Activated T-helper 1 cell treated with anti-CD3 and anti-CD28 coated beads, Interleukin-12 subunit alpha, Interleukin-12 subunit beta, Interleukin-2, Interleukin-4 antibody, amounts not matched to agents 30 ng/mL and 10 ng/mL and 1 ng/mL, durations not matched to agents 14 hours and 24 hours and 36 hours (primary cell): ENCODE measurements at regions of chr2 and their contacts with region 1.

Region 1: GRCh38 chr2:218568190-218569037 is at the starts of genes CNOT9 and USP37:
- DNase-seq: peak; percentile 100
- H3K4me3 Mint-ChIP-seq: peak within 1 kb of the TSS; percentile 94
- H3K27ac Mint-ChIP-seq: peak within 1 kb of the TSS; percentile 99
- H3K4me1 Mint-ChIP-seq: peaks cover 59% of the 10 kb centered on the region
- H3K27me3 Mint-ChIP-seq: peaks cover 3% of the 10 kb centered on the region
- total RNA-seq, gene CNOT9: 138 TPM in 2 replicates
- total RNA-seq, gene USP37: 43.5 and 50.4 TPM in 2 replicates

Region 2: GRCh38 chr2:217662984-217663602 is 905.3 kb before region 1 on chr2:
- intact Hi-C with region 1: no loop called
- DNase-seq: no peak
- H3K4me3 Mint-ChIP-seq: no peak overlapping the region
- H3K27ac Mint-ChIP-seq: no peak overlapping the region
- H3K4me1 Mint-ChIP-seq: peaks cover 17% of the 10 kb centered on the region
- H3K27me3 Mint-ChIP-seq: no peaks in the 10 kb centered on the region

Region 3: DNA sequence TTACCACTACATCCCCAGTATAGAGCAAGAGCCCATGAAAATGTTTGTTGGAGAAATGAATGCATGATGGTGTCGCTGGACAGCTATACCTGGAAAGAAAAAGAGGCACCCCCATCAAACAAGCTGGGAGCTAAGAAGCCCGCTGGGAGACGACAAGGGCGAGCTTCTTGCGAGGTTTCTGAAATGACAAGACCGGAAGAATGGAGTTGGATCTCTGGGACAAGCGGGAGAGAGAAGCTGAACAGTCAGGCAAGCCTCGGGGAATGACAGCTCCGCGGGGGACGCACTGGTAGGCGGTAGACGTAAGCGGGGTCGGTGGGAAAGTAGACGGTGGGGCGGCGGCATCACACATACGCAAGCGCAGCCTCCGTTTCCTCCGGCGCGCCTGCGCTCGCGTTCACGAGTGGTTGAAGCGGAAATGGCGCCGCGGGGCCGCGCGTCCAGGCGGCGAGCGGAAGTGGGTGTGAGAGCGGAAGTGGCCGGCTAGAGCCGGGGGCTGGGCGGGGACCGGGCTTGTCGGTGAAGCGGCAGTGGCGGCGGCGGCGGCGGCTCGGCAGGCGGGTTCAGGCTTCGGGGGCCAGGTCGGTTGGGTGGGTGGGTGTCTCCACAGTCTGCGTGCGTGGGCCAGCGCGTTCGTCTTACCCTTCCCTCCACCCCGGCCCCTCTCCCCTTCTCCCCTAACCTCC is 351.6 kb before region 1 on chr2 and contains the start of gene ARPC2:
- intact Hi-C with region 1: loop called (anchors 1 kb)
- DNase-seq: peak; percentile 96
- H3K4me3 Mint-ChIP-seq: peak within 1 kb of the TSS; percentile 91
- H3K27ac Mint-ChIP-seq: peak within 1 kb of the TSS; percentile 95
- H3K4me1 Mint-ChIP-seq: peaks cover 36% of the 10 kb centered on the region
- H3K27me3 Mint-ChIP-seq: no peaks in the 10 kb centered on the region
- total RNA-seq, gene ARPC2: 507 and 509 TPM in 2 replicates

Region 4: DNA sequence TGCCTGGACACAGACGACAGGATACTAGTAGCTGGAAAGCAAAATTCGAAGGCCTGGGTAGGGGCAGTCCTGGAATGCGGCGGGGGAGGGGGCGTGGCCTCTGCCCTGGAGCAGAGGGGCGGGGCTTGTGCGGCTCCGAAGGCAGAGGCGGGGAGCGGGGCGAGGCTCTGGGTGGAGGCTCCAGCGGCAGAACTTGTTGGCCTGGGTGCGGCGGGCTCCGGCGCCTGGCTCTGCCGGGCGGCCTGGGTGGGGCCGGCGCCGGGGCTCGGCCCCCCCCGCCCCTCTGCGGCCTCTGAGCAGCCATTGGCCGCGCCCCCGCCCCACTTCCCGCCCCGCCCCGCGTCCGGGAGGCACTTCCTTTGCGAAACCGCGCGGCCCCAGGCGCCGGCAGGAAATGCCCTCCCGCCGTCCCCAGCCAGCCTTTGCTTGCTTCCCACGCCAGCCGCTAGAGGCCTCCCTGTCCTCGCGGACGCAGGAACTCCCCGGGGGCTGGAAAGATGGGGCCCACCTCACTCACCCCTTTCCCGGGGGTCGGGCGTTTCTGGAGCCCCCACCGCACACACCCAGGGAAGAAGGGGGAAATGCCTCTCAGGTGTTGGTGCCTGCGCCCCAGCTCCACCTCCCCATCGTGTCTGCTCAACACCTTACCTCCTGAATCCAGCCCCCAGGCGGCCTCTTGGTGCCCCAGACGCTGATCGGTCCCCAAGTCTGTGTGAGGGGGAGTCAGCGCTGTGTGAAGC is 162.0 kb before region 1 on chr2:
- intact Hi-C with region 1: loop called (anchors 1 kb)
- DNase-seq: peak; percentile 90
- H3K4me3 Mint-ChIP-seq: peak overlapping the region; percentile 81
- H3K27ac Mint-ChIP-seq: peak overlapping the region; percentile 74
- H3K4me1 Mint-ChIP-seq: peaks cover 29% of the 10 kb centered on the region
- H3K27me3 Mint-ChIP-seq: no peaks in the 10 kb centered on the region

Region 5: GRCh38 chr2:218671654-218672566 is 103.5 kb after region 1 on chr2 and contains the starts of genes RNF25 and STK36:
- intact Hi-C with region 1: loop called (anchors 1 kb)
- DNase-seq: peak; percentile 77
- H3K4me3 Mint-ChIP-seq: peak within 1 kb of the TSS; percentile 100
- H3K27ac Mint-ChIP-seq: peak within 1 kb of the TSS; percentile 93
- H3K4me1 Mint-ChIP-seq: peaks cover 22% of the 10 kb centered on the region
- H3K27me3 Mint-ChIP-seq: no peaks in the 10 kb centered on the region
- total RNA-seq, gene RNF25: 29.1 and 31.6 TPM in 2 replicates
- total RNA-seq, gene STK36: 15.9 TPM in 2 replicates

Region 6: GRCh38 chr2:219177552-219178376 is 609.4 kb after region 1 on chr2 and contains the start of gene RETREG2:
- intact Hi-C with region 1: loop called (anchors 1 kb)
- DNase-seq: peak; percentile 74
- H3K4me3 Mint-ChIP-seq: peak within 1 kb of the TSS; percentile 91
- H3K27ac Mint-ChIP-seq: peak within 1 kb of the TSS; percentile 96
- H3K4me1 Mint-ChIP-seq: peaks cover 72% of the 10 kb centered on the region
- H3K27me3 Mint-ChIP-seq: no peaks in the 10 kb centered on the region
- total RNA-seq, gene RETREG2: 58.4 and 61.5 TPM in 2 replicates

Region 7: GRCh38 chr2:219597552-219598307 is 1029.3 kb after region 1 on chr2 and contains the start of gene STK11IP:
- intact Hi-C with region 1: loop called (anchors 5 kb)
- DNase-seq: peak; percentile 89
- H3K4me3 Mint-ChIP-seq: peak within 1 kb of the TSS; percentile 90
- H3K27ac Mint-ChIP-seq: peak within 1 kb of the TSS; percentile 96
- H3K4me1 Mint-ChIP-seq: peaks cover 26% of the 10 kb centered on the region
- H3K27me3 Mint-ChIP-seq: peaks cover 2% of the 10 kb centered on the region
- total RNA-seq, gene STK11IP: 38.0 and 38.9 TPM in 2 replicates